Activated B cell treated with CpG ODN at 0.5 μM for 24 hours (primary cell): ENCODE measurements at regions of chr1 and their contacts with region 1.

Region 1: GRCh38 chr1:183023601-183024316 is 539 bp downstream of the LAMC1 start:
- DNase-seq: peak; percentile 67
- ATAC-seq: peak; percentile 65
- H3K4me3 Mint-ChIP-seq: peak overlapping the region; percentile 94
- H3K27ac Mint-ChIP-seq: peak overlapping the region; percentile 86
- H3K4me1 Mint-ChIP-seq: peaks cover 48% of the 10 kb centered on the region
- H3K27me3 Mint-ChIP-seq: no peaks in the 10 kb centered on the region
- CTCF ChIP-seq: no peak

Region 2: GRCh38 chr1:182588500-182589452 is 435.0 kb before region 1 on chr1 and contains the start of gene RNASEL:
- CTCF ChIA-PET with region 1: no interaction called
- POLR2A ChIA-PET with region 1: no interaction called
- intact Hi-C with region 1: loop called (anchors 1 kb)
- DNase-seq: peak; percentile 39
- ATAC-seq: peak; percentile 90
- H3K4me3 Mint-ChIP-seq: peak within 1 kb of the TSS; percentile 92
- H3K27ac Mint-ChIP-seq: peak within 1 kb of the TSS; percentile 96
- H3K4me1 Mint-ChIP-seq: peaks cover 52% of the 10 kb centered on the region
- H3K27me3 Mint-ChIP-seq: no peaks in the 10 kb centered on the region
- CTCF ChIP-seq: no peak
- total RNA-seq, gene RNASEL: 10.0 and 11.1 TPM in 2 replicates

Region 3: DNA sequence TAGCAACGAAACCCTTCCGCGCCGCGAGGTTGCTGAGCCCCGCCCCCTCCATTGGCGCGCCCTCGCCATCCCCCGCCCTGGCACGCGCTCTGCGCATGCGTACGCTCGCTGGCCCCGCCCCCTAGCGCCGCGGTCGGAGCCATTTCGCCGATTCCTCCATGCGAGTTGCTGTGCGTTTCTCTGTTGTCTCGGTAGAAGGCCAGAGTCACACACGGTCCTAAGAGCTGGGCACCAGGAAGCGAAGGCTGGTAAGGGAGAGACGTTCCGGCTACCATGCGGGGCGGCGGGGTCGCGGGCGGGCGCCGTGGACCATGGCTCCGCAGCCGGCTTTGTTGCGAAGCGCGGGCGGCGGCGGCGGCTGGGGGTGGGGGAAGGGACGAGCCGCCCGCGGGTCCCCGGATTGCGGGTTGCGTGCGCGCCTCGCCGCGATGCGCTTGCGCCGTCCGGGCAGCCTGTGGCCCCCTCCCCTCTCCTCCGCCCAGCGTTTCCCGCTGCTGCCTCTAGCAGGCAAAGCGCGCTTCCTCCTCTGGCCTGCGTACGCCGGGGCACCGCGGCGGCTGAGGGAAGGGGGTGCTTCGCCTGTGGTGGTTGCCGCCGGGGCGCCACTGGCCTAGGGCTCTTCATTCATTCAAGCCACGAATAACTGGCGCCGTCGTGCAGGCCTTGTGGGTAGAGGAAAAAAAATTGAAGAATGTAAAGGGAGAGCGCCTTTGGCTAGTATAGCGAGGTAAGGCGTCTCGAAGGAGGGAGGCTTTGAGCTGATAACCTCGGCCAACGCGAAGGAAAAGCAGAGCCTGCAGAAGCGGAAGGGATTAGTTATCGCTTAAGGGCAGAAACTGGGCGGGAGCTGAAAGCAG is 184.3 kb before region 1 on chr1 and contains the start of gene DHX9:
- CTCF ChIA-PET with region 1: no interaction called
- POLR2A ChIA-PET with region 1: no interaction called
- intact Hi-C with region 1: loop called (anchors 2 kb)
- DNase-seq: peak; percentile 99
- ATAC-seq: peak; percentile 82
- H3K4me3 Mint-ChIP-seq: peak within 1 kb of the TSS; percentile 92
- H3K27ac Mint-ChIP-seq: peak within 1 kb of the TSS; percentile 98
- H3K4me1 Mint-ChIP-seq: peaks cover 39% of the 10 kb centered on the region
- H3K27me3 Mint-ChIP-seq: no peaks in the 10 kb centered on the region
- CTCF ChIP-seq: no peak
- total RNA-seq, gene DHX9: 265 and 266 TPM in 2 replicates

Region 4: DNA sequence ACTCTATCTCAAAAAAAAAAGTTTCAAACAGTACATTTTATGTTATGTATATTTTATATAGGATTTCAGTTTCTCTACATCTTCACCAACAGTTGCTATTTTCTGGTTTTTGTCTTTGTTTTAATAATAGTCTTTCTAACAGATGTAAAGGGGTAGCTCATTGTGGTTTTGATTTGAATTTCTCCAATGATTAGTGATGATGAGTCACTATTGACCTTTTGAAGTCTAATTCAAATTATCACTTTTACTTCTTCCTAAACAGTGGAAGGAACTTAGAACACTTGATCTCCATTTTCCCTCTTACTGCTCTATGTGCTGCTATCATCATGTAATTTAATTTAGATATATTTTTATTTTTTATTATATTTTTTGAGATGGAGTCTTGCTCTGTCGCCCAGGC is 39.1 kb before region 1 on chr1:
- CTCF ChIA-PET with region 1: no interaction called
- POLR2A ChIA-PET with region 1: interaction called, 5 read pairs
- intact Hi-C with region 1: loop called (anchors 1 kb)
- DNase-seq: no peak
- ATAC-seq: peak; percentile 70
- H3K4me3 Mint-ChIP-seq: no peak overlapping the region
- H3K27ac Mint-ChIP-seq: no peak overlapping the region
- H3K4me1 Mint-ChIP-seq: peaks cover 15% of the 10 kb centered on the region
- H3K27me3 Mint-ChIP-seq: peaks cover 9% of the 10 kb centered on the region
- CTCF ChIP-seq: no peak

Region 5: GRCh38 chr1:183048087-183049085 is 24.6 kb after region 1 on chr1:
- CTCF ChIA-PET with region 1: no interaction called
- POLR2A ChIA-PET with region 1: interaction called, 5 read pairs
- intact Hi-C with region 1: loop called (anchors 1 kb)
- DNase-seq: no peak
- ATAC-seq: peak; percentile 98
- H3K4me3 Mint-ChIP-seq: peak overlapping the region; percentile 8
- H3K27ac Mint-ChIP-seq: peak overlapping the region; percentile 88
- H3K4me1 Mint-ChIP-seq: peaks cover 78% of the 10 kb centered on the region
- H3K27me3 Mint-ChIP-seq: no peaks in the 10 kb centered on the region
- CTCF ChIP-seq: no peak

Region 6: DNA sequence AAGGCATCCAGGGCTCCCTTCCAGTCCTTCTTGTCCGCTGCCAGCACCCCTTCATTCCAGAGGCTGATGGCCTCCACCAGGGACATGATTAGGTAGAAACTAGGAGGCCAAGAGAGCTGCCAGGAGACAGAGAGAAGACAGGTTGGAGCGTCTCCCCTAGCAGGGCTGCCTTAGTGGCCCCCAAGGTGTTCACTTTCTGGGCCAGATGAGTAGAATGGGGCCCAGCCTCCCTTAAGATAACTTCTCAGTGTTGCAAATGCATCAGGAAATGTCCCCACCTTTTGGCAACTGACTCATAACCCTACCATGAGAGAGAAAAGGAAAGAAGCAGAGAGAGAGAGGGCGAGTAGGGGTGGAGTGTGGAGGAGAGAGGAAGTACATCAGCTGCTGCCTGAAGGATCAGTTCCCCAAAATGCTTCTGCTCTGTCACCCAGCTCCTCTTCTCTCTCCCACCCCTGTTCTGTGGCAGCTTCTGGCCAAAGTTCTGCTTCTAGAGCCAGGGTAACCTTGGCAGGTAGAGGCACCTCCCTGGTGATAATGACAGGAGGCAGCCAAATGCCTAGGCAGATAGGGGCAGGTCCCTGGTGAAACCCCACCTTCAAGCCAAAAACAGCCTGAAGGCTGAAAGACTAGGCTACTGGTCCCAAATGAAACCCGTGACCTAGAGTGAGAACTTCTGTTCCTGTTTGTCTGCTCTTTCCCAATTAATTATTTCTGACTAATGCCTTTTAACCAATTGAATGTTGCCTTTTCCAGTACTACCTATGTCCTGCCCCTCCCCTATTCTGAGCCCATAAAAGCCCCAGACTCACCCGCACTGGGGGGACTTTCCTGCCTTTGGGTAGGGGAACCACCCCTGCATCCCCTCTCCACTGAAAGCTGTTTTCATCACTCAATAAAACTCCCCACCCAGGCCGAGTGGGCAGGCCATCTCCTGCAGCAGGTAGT is 566.8 kb after region 1 on chr1 and contains the start of gene NCF2:
- CTCF ChIA-PET with region 1: no interaction called
- POLR2A ChIA-PET with region 1: no interaction called
- intact Hi-C with region 1: loop called (anchors 1 kb)
- DNase-seq: peak; percentile 55
- ATAC-seq: peak; percentile 78
- H3K4me3 Mint-ChIP-seq: peak within 1 kb of the TSS; percentile 88
- H3K27ac Mint-ChIP-seq: peak within 1 kb of the TSS; percentile 92
- H3K4me1 Mint-ChIP-seq: peaks cover 73% of the 10 kb centered on the region
- H3K27me3 Mint-ChIP-seq: no peaks in the 10 kb centered on the region
- CTCF ChIP-seq: no peak
- total RNA-seq, gene NCF2: 101 TPM in 2 replicates

Region 7: GRCh38 chr1:184051485-184052193 is 1027.9 kb after region 1 on chr1 and contains the start of gene TSEN15:
- CTCF ChIA-PET with region 1: no interaction called
- POLR2A ChIA-PET with region 1: no interaction called
- intact Hi-C with region 1: loop called (anchors 2 kb)
- DNase-seq: peak; percentile 76
- ATAC-seq: peak; percentile 95
- H3K4me3 Mint-ChIP-seq: peak within 1 kb of the TSS; percentile 98
- H3K27ac Mint-ChIP-seq: peak within 1 kb of the TSS; percentile 98
- H3K4me1 Mint-ChIP-seq: peaks cover 36% of the 10 kb centered on the region
- H3K27me3 Mint-ChIP-seq: peaks cover 26% of the 10 kb centered on the region
- CTCF ChIP-seq: no peak
- total RNA-seq, gene TSEN15: 60.8 and 61.2 TPM in 2 replicates